ENCODE measurements at regions of chr1 and their contacts with region 1.

Region 1: GRCh38 chr1:20493839-20494608 is 8.0 kb upstream of the CAMK2N1 start:
- DNase-seq: peak; percentile 85 to 86
- ATAC-seq: peak; percentile 75 to 95 (median 88)
- H3K4me3 ChIP-seq: no peak overlapping the region
- H3K27ac ChIP-seq: peak overlapping the region in 3 of 10 donors; percentile 16 to 79 (median 49)
- H3K4me1 ChIP-seq: peaks cover 5 to 31% (median 23%) of the 10 kb centered on the region in 9 donors
- H3K27me3 ChIP-seq: peaks cover 0 to 3% (median 0%) of the 10 kb centered on the region in 7 donors
- CTCF ChIP-seq: peak; percentile 94 to 98 (median 97)

Region 2: GRCh38 chr1:19918057-19918456 is 576.0 kb before region 1 on chr1:
- intact Hi-C with region 1: loop called (anchors 1 to 10 kb)
- DNase-seq: peak; percentile 75 to 80
- ATAC-seq: peak; percentile 49 to 87 (median 82)
- H3K4me3 ChIP-seq: no peak overlapping the region
- H3K27ac ChIP-seq: peak overlapping the region in 1 of 10 donors; percentile 17
- H3K4me1 ChIP-seq: peaks cover 0 to 10% (median 0%) of the 10 kb centered on the region in 9 donors
- H3K27me3 ChIP-seq: peaks cover 0 to 8% (median 0%) of the 10 kb centered on the region in 7 donors
- CTCF ChIP-seq: peak; percentile 80 to 92 (median 90)

Region 3: DNA sequence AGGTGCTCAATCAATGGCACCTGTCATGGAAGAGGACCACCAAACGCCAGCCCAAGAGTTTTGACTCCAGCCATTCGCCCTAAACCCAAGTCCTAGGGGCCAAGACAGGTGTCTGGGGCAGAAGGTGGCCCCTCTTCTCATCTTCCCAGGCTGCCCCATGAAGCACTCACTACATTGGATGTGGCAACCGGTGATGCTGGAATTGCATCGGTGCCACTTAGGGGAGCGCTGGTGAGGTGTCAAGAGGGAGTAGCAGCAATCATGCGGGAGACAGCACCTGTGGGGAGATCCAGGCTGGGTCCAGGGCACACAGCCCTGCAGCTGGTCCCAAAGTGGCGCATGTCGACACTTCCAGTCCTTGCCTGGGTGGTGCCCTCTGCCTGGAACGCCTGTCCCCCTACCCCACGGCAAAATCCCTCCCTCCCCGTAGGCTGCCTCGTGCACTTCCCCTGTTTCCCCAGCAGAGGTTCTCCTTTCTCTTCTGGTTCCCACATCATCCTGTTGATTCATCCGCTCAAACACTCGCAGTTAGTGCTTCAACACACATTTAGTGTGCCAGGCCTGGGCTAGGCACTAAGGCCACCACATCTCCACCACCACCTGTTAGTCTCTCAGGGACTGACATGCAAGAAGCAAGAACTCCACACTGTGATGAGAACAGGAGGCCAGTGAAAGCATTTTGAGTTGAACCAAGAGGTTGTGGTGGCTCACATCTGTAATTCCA is 393.2 kb before region 1 on chr1:
- intact Hi-C with region 1: loop called in 3 of 10 experiments (anchors 5 kb)
- DNase-seq: peak; percentile 28 to 44
- ATAC-seq: peak; percentile 63 to 87 (median 79)
- H3K4me3 ChIP-seq: no peak overlapping the region
- H3K27ac ChIP-seq: no peak overlapping the region
- H3K4me1 ChIP-seq: peaks cover 0 to 13% (median 0%) of the 10 kb centered on the region in 9 donors
- H3K27me3 ChIP-seq: no peaks in the 10 kb centered on the region
- CTCF ChIP-seq: peak; percentile 65 to 86 (median 78)

Region 4: DNA sequence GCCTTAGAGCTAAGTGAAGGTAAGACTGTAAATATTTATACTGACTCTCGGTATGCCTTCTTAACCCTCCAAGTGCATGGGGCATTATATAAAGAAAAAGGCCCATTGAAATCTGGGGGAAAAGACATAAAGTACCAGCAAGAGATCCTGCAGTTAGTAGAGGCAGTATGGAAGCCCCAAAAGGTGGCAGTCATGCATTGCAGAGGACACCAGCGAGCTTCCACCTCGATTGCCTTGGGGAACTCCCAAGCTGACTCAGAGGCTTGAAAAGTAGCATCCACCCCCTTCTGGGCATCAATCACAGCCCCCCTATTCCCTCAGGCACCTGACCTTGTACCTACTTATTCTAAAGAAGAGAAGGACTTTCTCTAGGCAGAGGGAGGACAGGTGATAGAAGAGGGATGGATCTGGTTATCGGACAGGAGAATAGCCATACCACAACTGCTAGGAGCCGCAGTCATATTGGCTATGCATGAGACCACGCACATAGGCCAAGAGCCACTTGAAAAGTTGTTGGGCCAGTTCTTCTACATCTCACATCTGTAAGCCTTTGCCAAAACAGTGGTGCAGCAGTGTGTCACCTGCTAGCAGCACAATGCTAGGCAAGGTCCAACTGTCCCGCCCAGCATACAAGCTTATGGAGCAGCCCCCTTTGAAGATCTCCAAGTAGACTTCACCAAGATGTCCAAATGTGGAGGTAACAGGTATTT is 335.5 kb before region 1 on chr1:
- intact Hi-C with region 1: loop called in 2 of 10 experiments (anchors 5 kb)
- DNase-seq: no peak
- ATAC-seq: no peak
- H3K4me3 ChIP-seq: no peak overlapping the region
- H3K27ac ChIP-seq: no peak overlapping the region
- H3K4me1 ChIP-seq: peaks cover 0 to 11% (median 0%) of the 10 kb centered on the region in 9 donors
- H3K27me3 ChIP-seq: no peaks in the 10 kb centered on the region
- CTCF ChIP-seq: no peak

Region 5: DNA sequence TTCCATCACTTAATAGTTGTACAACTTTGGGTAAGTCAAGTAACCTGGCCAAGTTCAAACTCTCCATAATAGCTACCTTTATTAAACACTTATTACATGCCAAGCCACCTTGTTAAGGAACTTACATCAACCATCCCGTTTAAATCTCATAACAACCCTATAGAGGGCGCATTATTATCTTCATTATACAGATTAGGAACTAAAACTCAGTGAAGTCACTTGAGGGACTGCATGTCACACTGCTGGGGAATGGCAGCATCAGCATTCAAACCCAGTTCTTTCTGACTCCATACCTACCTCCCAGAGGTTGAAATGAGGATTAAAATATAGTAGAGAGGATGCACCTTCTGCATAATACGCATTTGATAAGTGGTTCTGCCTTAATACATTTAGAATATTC is 260.6 kb before region 1 on chr1:
- intact Hi-C with region 1: loop called in 1 of 10 experiments (anchors 5 kb)
- DNase-seq: no peak
- ATAC-seq: peak in 2 of 8 donors; percentile 27 to 42
- H3K4me3 ChIP-seq: no peak overlapping the region
- H3K27ac ChIP-seq: no peak overlapping the region
- H3K4me1 ChIP-seq: peaks cover 0 to 6% (median 0%) of the 10 kb centered on the region in 9 donors
- H3K27me3 ChIP-seq: peaks cover 0 to 67% (median 48%) of the 10 kb centered on the region in 7 donors
- CTCF ChIP-seq: peak in 7 of 9 donors; percentile 32 to 44 (median 40)

Region 6: DNA sequence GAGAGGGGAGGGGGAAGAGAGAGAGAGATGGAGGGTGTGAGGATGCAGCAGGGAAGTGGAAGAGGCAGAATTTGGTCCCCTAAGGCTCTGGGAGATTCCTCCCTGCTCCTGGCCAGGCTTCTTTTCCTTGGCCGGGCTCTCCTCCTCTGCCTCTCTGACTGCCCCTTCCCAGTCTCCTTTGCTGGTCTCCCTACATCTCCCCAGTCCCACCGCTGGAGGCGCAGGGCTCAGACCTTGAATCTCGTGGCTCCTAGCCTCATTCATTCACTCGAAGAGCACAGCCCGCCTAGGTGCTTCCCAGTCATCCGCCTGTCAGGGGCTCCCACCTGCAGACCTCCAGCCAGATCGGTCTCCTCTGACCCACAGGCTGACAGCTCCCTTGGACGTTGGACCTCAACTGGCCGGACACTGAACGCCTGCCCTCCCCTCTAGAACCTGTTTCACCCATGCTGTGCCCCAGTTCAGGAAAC is 126.9 kb before region 1 on chr1:
- intact Hi-C with region 1: loop called in 9 of 10 experiments (anchors 1 to 10 kb)
- DNase-seq: peak; percentile 40 to 41
- ATAC-seq: peak; percentile 46 to 84 (median 68)
- H3K4me3 ChIP-seq: peak overlapping the region in 9 of 10 donors; percentile 26 to 53 (median 42)
- H3K27ac ChIP-seq: peak overlapping the region in 1 of 10 donors; percentile 47
- H3K4me1 ChIP-seq: peaks cover 0 to 24% (median 9%) of the 10 kb centered on the region in 9 donors
- H3K27me3 ChIP-seq: peaks cover 0 to 82% (median 68%) of the 10 kb centered on the region in 7 donors
- CTCF ChIP-seq: peak; percentile 13 to 61 (median 45)